ENCODE measurements at regions of chrX and their contacts with region 1.

Region 1: GRCh38 chrX:2286731-2287130 is 214.0 kb downstream of the DHRSX start:
- DNase-seq: no peak
- ATAC-seq: no peak
- H3K4me3 Mint-ChIP-seq: no peak overlapping the region
- H3K27ac Mint-ChIP-seq: no peak overlapping the region
- H3K4me1 Mint-ChIP-seq: peaks cover 2% of the 10 kb centered on the region
- H3K27me3 Mint-ChIP-seq: no peaks in the 10 kb centered on the region
- CTCF ChIP-seq: no peak

Region 2: GRCh38 chrX:2589186-2590030 is 302.7 kb after region 1 on chrX:
- CTCF ChIA-PET with region 1: no interaction called
- POLR2A ChIA-PET with region 1: no interaction called
- intact Hi-C with region 1: loop called (anchors 5 kb)
- DNase-seq: no peak
- ATAC-seq: no peak
- H3K4me3 Mint-ChIP-seq: no peak overlapping the region
- H3K27ac Mint-ChIP-seq: no peak overlapping the region
- H3K4me1 Mint-ChIP-seq: peaks cover 10% of the 10 kb centered on the region
- H3K27me3 Mint-ChIP-seq: peaks cover 9% of the 10 kb centered on the region
- CTCF ChIP-seq: no peak